ENCODE measurements at regions of chr1 and their contacts with region 1.

Region 1: DNA sequence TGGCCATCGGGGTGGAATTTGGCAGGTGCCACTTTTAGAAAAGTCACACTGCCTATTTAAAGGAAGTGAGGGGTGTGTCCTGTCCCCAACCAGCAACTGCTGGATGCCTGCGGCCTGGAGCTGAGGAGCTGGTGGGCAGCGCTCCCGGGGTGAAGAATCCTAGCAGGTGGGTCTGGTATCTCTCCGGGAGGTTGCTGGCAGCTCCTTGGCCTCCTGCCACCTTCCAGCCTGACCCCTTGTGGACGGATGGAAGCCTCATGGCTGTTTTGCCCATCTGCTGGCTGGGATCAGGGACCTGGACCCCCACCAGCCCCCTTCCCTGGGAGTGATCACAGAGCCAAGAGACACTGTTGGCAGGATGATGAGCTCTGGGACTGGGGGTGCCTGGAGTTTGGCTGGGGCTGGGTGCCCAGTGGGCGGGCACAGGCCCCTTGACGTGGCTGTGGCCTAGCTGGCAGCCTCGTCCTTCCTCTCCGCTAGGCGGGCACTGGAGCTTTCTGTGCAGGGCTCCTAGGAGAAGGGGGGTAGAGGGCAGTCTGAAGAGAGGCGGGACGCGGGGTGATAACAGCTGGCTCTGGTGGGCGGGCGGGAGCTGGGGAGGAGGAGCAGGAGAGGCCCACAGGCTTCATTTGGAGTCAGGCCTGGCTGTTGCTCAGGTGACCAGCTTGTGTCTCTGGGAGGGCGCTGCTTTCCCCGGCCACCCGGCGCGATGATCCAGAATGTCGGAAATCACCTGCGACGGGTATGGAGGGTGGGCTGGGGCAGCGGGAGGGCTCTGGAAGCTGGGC is at the start of gene ACOT11:
- DNase-seq: peak; percentile 70
- H3K4me3 ChIP-seq: peak within 1 kb of the TSS in 3 of 4 donors; percentile 3 to 26 (median 8)
- H3K27ac ChIP-seq: peak within 1 kb of the TSS; percentile 61 to 87 (median 70)
- H3K4me1 ChIP-seq: peaks cover 8 to 32% (median 23%) of the 10 kb centered on the region in 4 donors
- H3K27me3 ChIP-seq: no peaks in the 10 kb centered on the region
- CTCF ChIP-seq: peak; percentile 11 to 68 (median 37)
- EP300 ChIP-seq: no peak
- POLR2A ChIP-seq: no peak
- total RNA-seq, gene ACOT11: 70.6 to 79.7 (median 75.3) TPM

Region 2: DNA sequence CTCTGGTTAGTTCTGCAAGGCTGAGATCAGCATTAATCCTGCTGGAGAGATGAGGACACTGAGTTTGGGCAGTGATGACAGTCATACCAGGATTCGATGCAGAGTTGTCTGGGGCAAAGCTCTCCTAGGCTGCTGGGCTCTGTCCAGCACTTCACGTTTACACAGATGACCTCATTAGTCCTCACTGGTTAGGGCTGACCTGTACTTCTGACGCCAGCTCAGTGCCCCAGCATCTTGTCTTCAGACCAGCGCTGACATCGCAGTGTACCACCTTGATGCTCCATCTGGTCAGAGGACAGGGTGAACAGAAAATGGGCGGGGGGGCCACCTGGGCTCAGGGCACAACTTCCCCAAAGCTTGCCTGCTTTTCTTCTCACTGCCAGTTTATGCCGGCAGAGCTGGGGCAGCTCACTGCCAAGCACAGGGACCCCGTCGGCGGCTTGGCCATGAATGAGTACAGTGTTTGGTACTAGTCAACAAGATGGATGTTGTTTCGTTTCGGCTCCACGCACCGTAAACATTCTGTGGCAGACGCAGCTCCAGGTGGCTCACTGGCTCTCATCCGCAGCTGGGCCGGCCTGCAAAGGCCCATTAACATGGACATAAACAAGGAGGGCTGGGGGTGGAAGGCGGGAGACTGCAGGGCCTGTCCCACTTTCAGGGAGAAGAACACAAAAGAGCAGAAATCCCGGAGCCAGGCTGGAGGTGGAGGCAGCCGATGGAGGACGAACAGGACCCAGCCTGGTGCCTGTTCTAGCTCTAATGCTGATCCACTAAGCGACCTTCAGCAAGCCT is 927.5 kb before region 1 on chr1:
- in situ Hi-C with region 1: no loop called
- intact Hi-C with region 1: no loop called
- DNase-seq: peak; percentile 7
- H3K4me3 ChIP-seq: no peak overlapping the region
- H3K27ac ChIP-seq: no peak overlapping the region
- H3K4me1 ChIP-seq: no peaks in the 10 kb centered on the region
- H3K27me3 ChIP-seq: no peaks in the 10 kb centered on the region
- CTCF ChIP-seq: no peak
- EP300 ChIP-seq: no peak
- POLR2A ChIP-seq: no peak

Region 3: DNA sequence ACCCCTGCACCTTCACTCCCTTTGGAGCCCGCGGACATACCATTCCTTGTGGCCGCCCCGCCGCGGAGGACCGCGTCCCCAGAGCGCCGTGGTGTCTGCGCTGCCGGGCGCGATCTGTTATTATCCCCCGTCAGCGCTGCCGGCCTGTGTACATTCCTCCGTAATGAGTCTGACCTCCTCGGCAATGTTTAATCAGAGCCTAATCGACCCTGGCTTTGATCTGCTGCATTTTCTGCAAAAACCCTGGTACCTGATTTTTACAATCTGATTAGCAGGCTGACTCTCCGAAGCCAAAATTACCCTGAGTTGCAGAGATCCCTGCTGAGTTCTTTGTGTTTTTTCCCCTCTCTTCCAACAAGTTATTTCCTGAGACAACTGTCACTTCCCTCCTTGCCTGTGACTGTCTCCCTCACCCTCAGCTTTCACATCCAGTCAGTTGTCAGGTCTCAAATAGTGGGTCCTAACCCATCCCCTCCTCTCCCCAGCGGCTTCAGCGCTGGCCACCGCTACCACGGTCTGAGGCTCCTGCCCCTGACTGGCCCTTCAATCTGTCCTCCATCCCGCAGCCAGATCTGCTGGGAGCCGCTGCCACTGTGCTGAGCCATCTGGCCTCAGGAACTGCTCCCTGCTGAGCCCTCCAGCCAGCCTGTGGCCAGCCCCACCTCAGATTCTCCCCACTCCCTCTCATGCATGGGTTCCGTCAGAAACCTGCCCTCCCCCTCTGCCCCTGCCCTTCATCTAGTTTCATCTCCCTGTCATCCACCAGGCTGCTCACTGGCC is 862.3 kb before region 1 on chr1:
- in situ Hi-C with region 1: no loop called
- intact Hi-C with region 1: no loop called
- DNase-seq: no peak
- H3K4me3 ChIP-seq: no peak overlapping the region
- H3K27ac ChIP-seq: no peak overlapping the region
- H3K4me1 ChIP-seq: peaks cover 5 to 16% (median 9%) of the 10 kb centered on the region in 4 donors
- H3K27me3 ChIP-seq: peaks cover 50% of the 10 kb centered on the region
- CTCF ChIP-seq: no peak
- EP300 ChIP-seq: no peak
- POLR2A ChIP-seq: no peak

Region 4: GRCh38 chr1:54464482-54465146 is 83.2 kb before region 1 on chr1:
- in situ Hi-C with region 1: no loop called
- intact Hi-C with region 1: no loop called
- DNase-seq: no peak
- H3K4me3 ChIP-seq: no peak overlapping the region
- H3K27ac ChIP-seq: peak overlapping the region in 1 of 4 donors; percentile 70
- H3K4me1 ChIP-seq: peaks cover 5 to 32% (median 7%) of the 10 kb centered on the region in 4 donors
- H3K27me3 ChIP-seq: no peaks in the 10 kb centered on the region
- CTCF ChIP-seq: no peak
- EP300 ChIP-seq: no peak
- POLR2A ChIP-seq: no peak

Region 5: DNA sequence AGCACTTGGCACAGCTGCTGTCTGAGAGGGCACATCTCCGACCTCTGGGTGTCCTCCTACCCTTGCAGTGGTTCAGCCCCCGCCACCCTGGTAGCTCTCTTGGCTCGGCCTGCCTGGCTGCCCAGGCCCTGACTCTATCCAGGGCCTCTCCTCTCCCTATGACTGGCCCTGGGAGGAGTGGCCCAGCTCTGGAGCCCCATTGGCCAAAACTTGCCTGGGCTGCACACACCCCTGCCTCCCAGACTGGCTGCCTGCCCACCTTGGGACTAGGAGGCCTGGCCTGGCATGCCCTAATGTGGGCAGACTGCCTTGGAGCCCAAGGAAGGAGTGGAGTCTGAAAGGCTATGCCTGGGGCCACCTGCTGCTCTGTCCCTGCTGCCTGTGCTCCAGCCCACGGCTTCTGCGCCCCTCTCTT is 33.8 kb after region 1 on chr1:
- in situ Hi-C with region 1: no loop called
- intact Hi-C with region 1: loop called (anchors 5 kb)
- DNase-seq: peak; percentile 89
- H3K4me3 ChIP-seq: no peak overlapping the region
- H3K27ac ChIP-seq: peak overlapping the region; percentile 64 to 87 (median 73)
- H3K4me1 ChIP-seq: peaks cover 16 to 38% (median 19%) of the 10 kb centered on the region in 4 donors
- H3K27me3 ChIP-seq: no peaks in the 10 kb centered on the region
- CTCF ChIP-seq: peak in 1 of 5 experiments; percentile 17
- EP300 ChIP-seq: peak; percentile 6
- POLR2A ChIP-seq: peak; percentile 36

Measured in transverse colon (tissue), 4 donors.